ENCODE measurements at regions of chr9 and their contacts with region 1.

Region 1: GRCh38 chr9:105157130-105157583 is 87.3 kb upstream of the SLC44A1 start:
- H3K4me3 Mint-ChIP-seq: no peak overlapping the region
- H3K27ac Mint-ChIP-seq: no peak overlapping the region
- H3K4me1 Mint-ChIP-seq: peaks cover 29% of the 10 kb centered on the region
- H3K27me3 Mint-ChIP-seq: no peaks in the 10 kb centered on the region

Region 2: DNA sequence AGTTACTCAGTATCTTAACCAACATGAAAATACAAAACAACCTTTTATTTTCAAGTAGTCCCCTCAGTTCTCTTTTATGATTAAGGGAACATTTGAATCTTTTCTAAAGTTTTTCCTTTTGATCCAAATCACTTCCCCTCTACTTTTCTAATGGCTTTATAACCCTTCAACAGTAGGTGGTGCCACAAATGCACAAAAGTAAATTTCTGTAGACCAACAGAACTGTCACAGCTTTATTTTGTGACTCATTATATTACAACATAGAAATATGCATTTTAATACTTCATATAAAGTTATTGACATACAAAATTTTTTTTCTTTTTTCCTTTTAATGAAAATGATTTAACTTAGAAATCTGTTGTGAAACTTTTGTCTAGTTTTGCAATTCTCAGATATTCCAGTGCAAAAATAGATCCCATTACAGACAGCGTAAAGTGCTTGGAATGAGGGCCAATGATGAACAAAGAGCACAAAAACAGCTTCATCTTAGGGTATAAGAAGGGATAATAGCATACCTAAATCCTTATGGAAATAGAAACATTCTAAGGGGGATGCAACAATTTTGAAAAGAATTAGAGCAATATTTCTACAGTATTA is 376.3 kb before region 1 on chr9:
- intact Hi-C with region 1: loop called (anchors 5 kb)
- H3K4me3 Mint-ChIP-seq: no peak overlapping the region
- H3K27ac Mint-ChIP-seq: peak overlapping the region; percentile 72
- H3K4me1 Mint-ChIP-seq: peaks cover 17% of the 10 kb centered on the region
- H3K27me3 Mint-ChIP-seq: no peaks in the 10 kb centered on the region

Region 3: GRCh38 chr9:104868687-104869404 is 288.3 kb before region 1 on chr9:
- intact Hi-C with region 1: loop called (anchors 2 kb)
- H3K4me3 Mint-ChIP-seq: peak overlapping the region; percentile 39
- H3K27ac Mint-ChIP-seq: peak overlapping the region; percentile 96
- H3K4me1 Mint-ChIP-seq: peaks cover 81% of the 10 kb centered on the region
- H3K27me3 Mint-ChIP-seq: no peaks in the 10 kb centered on the region

Region 4: GRCh38 chr9:104968025-104968982 is 188.9 kb before region 1 on chr9:
- intact Hi-C with region 1: loop called (anchors 2 kb)
- H3K4me3 Mint-ChIP-seq: peak overlapping the region; percentile 97
- H3K27ac Mint-ChIP-seq: peak overlapping the region; percentile 85
- H3K4me1 Mint-ChIP-seq: peaks cover 19% of the 10 kb centered on the region
- H3K27me3 Mint-ChIP-seq: peaks cover 6% of the 10 kb centered on the region

Region 5: DNA sequence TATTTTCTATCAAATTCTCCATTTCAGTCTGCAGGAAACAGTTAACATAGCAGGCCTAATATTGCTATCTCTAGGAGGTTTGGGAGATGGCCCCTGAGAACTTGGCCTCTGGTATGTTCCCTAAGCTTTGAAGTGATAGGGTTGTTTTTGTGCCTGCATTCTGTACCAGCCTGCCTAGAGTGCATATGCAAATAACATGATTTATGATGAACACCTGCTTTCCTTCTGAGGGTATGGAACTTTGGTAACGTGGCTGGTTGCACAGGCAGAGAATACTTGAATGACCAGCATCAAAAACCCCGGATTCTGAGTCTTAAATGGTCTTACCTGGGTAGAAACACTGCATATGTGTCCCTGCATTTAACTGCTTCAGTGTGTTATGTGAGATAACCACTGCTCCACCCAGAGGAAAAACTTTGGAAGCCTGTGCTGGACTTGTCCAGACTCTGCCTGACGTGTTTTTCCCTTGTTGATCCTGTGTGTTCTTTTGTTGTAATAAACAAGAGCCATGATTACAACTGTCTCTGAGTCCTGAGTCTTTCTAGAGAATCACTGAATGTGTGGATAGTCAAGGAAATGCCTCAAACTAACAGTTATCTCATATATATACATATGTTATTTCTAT is 117.9 kb before region 1 on chr9:
- intact Hi-C with region 1: no loop called
- H3K4me3 Mint-ChIP-seq: no peak overlapping the region
- H3K27ac Mint-ChIP-seq: no peak overlapping the region
- H3K4me1 Mint-ChIP-seq: peaks cover 35% of the 10 kb centered on the region
- H3K27me3 Mint-ChIP-seq: no peaks in the 10 kb centered on the region

Region 6: DNA sequence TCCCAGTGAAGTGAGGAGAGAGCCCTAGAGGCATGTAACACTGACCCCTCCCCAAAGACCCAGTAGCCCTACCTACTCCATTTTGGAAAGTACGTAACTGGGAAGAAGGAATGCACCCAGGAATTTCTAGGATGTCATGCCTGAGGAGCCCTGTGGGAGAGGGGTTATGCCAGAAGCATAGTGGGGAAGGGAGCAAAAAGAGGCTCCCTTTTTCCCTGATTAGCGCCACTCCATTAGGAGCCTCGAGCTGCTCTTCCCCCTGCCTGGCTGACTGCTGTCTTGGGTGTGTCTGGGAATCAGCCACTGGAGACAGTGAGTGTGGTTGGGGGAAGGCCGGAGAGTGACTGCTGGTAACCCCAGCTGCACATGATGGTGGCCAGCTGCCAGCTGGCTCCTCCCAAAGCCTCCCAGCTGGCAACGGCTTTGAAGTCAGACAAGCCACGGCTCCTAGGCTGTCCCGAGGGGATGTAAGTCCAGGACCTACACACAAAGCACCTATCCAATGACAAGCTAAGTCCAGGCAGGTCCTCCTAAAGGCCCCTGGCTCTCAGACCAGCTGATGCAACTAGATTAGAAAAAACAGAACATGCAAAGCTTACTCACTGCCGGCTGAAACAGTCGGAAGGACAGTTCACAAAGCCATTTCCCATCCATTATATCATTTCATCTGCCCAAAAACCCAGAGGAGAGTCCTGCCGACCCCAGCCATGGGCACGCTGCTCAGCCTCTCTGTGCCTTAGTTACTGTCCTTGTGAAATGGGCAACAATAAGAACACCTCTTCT is 92.7 kb before region 1 on chr9:
- intact Hi-C with region 1: loop called (anchors 5 kb)
- H3K4me3 Mint-ChIP-seq: peak overlapping the region; percentile 54
- H3K27ac Mint-ChIP-seq: peak overlapping the region; percentile 92
- H3K4me1 Mint-ChIP-seq: peaks cover 67% of the 10 kb centered on the region
- H3K27me3 Mint-ChIP-seq: peaks cover 4% of the 10 kb centered on the region

Region 7: GRCh38 chr9:105244003-105244733 is 87.0 kb after region 1 on chr9 and contains the start of gene SLC44A1:
- intact Hi-C with region 1: loop called (anchors 2 kb)
- H3K4me3 Mint-ChIP-seq: peak within 1 kb of the TSS; percentile 99
- H3K27ac Mint-ChIP-seq: peak within 1 kb of the TSS; percentile 99
- H3K4me1 Mint-ChIP-seq: peaks cover 45% of the 10 kb centered on the region
- H3K27me3 Mint-ChIP-seq: peaks cover 2% of the 10 kb centered on the region